ENCODE measurements at regions of chr9 and their contacts with region 1.

Region 1: DNA sequence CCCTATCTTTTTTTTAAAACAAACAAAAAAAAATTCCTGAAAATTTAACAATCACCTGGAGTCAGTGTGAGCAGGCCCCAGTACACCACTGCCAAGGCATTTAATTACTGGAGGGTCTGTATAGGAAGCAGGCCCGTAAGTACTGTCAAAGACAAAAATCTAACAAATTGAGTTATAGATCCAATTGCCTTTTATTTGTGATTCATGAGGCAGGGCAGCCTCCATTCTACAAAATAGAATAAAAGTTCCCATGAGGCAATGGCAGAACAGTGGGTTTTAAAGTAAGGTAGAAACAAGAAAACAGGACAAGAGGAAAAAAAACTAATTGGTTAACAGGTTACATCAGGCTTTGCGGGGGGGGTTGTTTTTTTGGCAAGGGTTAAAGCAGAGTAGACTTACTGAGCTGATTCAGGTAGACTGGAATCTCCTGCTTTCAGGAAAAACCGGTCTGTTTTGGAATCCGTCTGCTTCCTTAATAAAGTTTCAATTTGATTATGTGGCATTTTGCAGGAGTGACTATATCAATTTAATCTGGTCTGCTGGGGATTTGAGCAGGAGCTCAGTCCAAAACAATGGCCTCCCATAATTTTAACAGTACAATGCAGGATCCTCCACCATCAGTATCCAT is 48.9 kb downstream of the AUH start:
- DNase-seq: peak; percentile 80
- H3K4me3 ChIP-seq: no peak overlapping the region
- H3K27ac ChIP-seq: no peak overlapping the region
- H3K4me1 ChIP-seq: peaks cover 7% of the 10 kb centered on the region
- H3K27me3 ChIP-seq: no peaks in the 10 kb centered on the region
- CTCF ChIP-seq: no peak

Region 2: DNA sequence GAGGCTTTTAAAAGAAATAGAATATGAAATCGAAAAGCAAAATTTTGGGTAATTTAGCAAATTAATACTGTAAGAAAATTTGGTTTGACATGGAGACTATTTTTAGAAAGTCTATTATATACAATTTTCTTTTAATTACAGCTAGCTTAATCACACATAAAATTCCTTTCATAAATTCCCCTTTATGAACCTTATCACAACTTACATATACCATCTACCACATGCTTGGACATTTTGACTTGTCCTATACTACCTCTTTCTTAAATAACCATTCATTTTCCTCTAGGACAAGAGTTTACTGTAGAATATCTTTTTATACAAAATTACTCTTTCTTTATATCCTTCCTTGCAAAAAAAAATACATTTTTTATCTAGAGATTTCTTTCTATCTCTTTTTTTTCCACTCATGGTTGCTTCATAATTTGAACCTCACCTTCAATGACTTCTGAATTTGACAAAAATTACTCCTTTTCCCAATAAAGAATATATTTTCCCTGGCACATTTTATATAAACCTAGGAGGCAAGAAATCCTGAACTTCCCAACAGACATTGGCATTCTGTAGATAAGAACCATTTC is 545.2 kb before region 1 on chr9:
- CTCF ChIA-PET with region 1: interaction called, 10 read pairs
- dilution Hi-C with region 1: no loop called
- in situ Hi-C with region 1: no loop called
- intact Hi-C with region 1: no loop called
- DNase-seq: no peak
- H3K4me3 ChIP-seq: no peak overlapping the region
- H3K27ac ChIP-seq: no peak overlapping the region
- H3K4me1 ChIP-seq: peaks cover 3% of the 10 kb centered on the region
- H3K27me3 ChIP-seq: no peaks in the 10 kb centered on the region
- CTCF ChIP-seq: no peak

Measured in mammary epithelial cell (primary cell).